ENCODE measurements at regions of chr7 and their contacts with region 1.

Region 1: GRCh38 chr7:131945313-131945911 is 389.0 kb upstream of the PODXL start:
- DNase-seq: no peak
- ATAC-seq: peak; percentile 33 to 55
- H3K4me3 ChIP-seq: peak overlapping the region; percentile 23 to 46 (median 36)
- H3K27ac ChIP-seq: no peak overlapping the region
- H3K4me1 ChIP-seq: peaks cover 8 to 9% of the 10 kb centered on the region in 2 donors
- H3K27me3 ChIP-seq: no peaks in the 10 kb centered on the region
- CTCF ChIP-seq: peak; percentile 77 to 93 (median 85)
- POLR2A ChIP-seq: no peak

Region 2: DNA sequence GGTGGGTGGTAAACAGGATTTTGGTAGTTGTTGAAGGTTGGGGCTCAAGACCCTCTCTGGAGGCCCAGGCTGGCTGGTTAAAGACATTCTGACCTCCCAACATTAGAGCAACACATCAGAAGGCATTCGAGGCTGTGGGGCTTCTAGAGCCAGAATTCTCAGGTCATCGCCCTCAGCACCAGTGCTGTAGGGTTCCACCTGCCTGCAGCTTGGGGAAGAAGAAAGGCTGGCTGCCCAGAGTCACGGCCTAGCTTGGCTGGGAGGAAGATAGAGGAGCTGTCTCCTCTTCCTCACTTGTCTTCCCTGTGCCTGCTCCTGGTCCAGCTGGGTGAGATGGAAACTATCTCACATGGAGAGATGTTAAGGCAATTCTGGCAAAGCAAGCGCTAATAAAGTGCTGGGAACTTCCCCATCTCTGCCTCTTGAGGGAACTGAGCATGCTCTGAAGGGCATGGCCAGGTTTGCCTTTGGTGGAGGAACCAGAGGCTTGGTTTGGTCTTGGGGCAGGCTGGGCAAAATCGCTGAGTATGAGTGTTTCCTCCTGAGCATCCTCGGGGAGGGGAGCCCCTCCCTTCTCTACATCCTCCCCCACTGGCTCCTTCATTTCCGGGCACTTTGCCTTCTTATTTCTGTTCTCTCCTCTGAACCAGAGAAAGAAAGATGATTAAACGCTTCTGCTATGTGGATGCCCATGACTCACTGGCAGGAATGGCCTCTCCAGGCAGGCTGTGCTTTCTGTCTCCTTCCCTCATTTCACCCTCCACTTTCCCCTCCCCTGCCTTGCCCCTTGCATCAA is 120.0 kb after region 1 on chr7:
- in situ Hi-C with region 1: no loop called
- intact Hi-C with region 1: loop called (anchors 10 kb)
- DNase-seq: peak; percentile 75 to 83
- ATAC-seq: peak; percentile 90 to 95
- H3K4me3 ChIP-seq: no peak overlapping the region
- H3K27ac ChIP-seq: peak overlapping the region; percentile 79 to 95 (median 88)
- H3K4me1 ChIP-seq: peaks cover 51 to 53% of the 10 kb centered on the region in 2 donors
- H3K27me3 ChIP-seq: no peaks in the 10 kb centered on the region
- CTCF ChIP-seq: no peak
- POLR2A ChIP-seq: no peak

Region 3: DNA sequence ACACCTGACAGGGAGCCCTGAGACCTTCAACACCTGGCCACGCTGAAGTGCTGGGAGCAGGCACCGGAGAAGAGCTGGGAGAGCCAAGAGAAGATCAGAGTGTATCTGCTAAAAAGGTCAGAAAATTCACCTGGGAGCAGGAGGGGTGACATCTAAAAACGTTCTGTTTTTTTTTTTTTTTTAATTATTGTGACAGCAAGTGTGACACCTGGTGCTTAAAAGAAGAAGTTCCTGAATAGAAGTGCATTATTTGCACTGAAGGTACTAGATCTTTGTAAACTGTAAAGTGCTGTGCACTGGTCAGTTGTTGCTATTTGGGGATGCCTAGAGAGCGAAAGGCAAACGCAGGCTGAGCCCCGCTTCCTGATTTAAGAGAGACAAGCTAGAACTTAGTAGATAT is 208.8 kb after region 1 on chr7:
- in situ Hi-C with region 1: loop called in 1 of 4 experiments (anchors 5 kb)
- intact Hi-C with region 1: loop called (anchors 1 kb)
- DNase-seq: no peak
- ATAC-seq: no peak
- H3K4me3 ChIP-seq: no peak overlapping the region
- H3K27ac ChIP-seq: no peak overlapping the region
- H3K4me1 ChIP-seq: no peaks in the 10 kb centered on the region
- H3K27me3 ChIP-seq: no peaks in the 10 kb centered on the region
- CTCF ChIP-seq: peak in 2 of 5 experiments; percentile 26 to 31
- POLR2A ChIP-seq: no peak